ENCODE measurements at regions of chr3 and their contacts with region 1.

Region 1: GRCh38 chr3:141311496-141312353 is 56.6 kb upstream of the ZBTB38 start:
- DNase-seq: peak; percentile 92
- ATAC-seq: peak; percentile 97
- H3K4me3 Mint-ChIP-seq: peak overlapping the region; percentile 100
- H3K27ac Mint-ChIP-seq: peak overlapping the region; percentile 98
- H3K4me1 Mint-ChIP-seq: peaks cover 19% of the 10 kb centered on the region
- H3K27me3 Mint-ChIP-seq: no peaks in the 10 kb centered on the region
- CTCF ChIP-seq: no peak

Region 2: DNA sequence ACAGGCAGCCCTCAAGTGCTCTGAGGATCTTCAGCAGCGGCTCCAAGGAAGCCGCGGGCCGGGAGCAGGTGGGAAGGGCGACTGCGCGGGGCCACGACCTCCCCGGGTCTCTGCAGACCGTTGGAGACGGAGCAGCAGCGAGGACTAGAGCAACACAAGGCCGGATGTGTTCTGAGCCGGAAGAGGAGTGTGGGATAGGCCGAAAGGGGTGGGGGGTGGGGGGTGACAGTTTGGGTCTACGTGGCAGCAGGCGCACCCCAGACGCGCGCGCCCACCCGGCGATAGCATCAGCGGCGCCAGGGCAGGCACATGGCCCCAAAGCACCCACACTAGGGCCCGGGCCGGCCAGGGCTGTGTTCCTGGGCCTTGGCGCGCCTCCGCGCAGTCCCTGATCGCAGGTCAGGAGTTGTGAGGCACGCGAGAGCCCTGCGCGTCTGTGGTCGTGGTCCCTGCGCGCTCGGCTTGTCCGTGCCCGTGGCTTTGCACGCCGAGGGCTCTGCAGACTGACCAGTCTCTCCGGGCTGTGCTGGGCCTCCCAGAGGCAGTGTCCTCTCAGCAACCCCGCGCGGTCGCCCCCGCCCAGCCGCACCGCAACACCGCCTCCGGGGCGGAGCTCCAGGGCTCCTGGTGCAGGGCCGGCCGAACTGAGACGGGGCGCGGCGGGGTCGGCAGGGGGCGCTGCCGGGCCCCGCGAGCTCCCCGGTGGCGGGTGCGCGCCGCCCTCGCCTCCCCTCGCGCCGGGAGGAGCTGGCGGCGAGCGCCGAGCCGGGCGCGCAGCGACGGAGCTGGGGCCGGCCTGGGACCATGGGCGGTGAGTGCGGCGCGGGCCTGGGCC is 80.4 kb before region 1 on chr3 and contains the start of gene PXYLP1:
- CTCF ChIA-PET with region 1: interaction called, 4 read pairs
- POLR2A ChIA-PET with region 1: interaction called, 12 read pairs
- intact Hi-C with region 1: loop called (anchors 1 kb)
- DNase-seq: peak; percentile 91
- ATAC-seq: peak; percentile 96
- H3K4me3 Mint-ChIP-seq: peak within 1 kb of the TSS; percentile 93
- H3K27ac Mint-ChIP-seq: peak within 1 kb of the TSS; percentile 94
- H3K4me1 Mint-ChIP-seq: peaks cover 16% of the 10 kb centered on the region
- H3K27me3 Mint-ChIP-seq: no peaks in the 10 kb centered on the region
- CTCF ChIP-seq: no peak
- total RNA-seq, gene PXYLP1: 2.3 and 2.7 TPM in 2 replicates

Region 3: GRCh38 chr3:141360888-141361598 is 49.3 kb after region 1 on chr3:
- CTCF ChIA-PET with region 1: interaction called, 15 read pairs
- POLR2A ChIA-PET with region 1: interaction called, 5 read pairs
- intact Hi-C with region 1: no loop called
- DNase-seq: no peak
- ATAC-seq: peak; percentile 49
- H3K4me3 Mint-ChIP-seq: peak overlapping the region; percentile 13
- H3K27ac Mint-ChIP-seq: no peak overlapping the region
- H3K4me1 Mint-ChIP-seq: peaks cover 7% of the 10 kb centered on the region
- H3K27me3 Mint-ChIP-seq: peaks cover 3% of the 10 kb centered on the region
- CTCF ChIP-seq: no peak

Region 4: GRCh38 chr3:141441381-141442364 is 129.9 kb after region 1 on chr3:
- CTCF ChIA-PET with region 1: interaction called, 25 read pairs
- POLR2A ChIA-PET with region 1: interaction called, 19 read pairs
- intact Hi-C with region 1: loop called (anchors 1 kb)
- DNase-seq: peak; percentile 60
- ATAC-seq: peak; percentile 100
- H3K4me3 Mint-ChIP-seq: peak overlapping the region; percentile 20
- H3K27ac Mint-ChIP-seq: peak overlapping the region; percentile 69
- H3K4me1 Mint-ChIP-seq: peaks cover 29% of the 10 kb centered on the region
- H3K27me3 Mint-ChIP-seq: no peaks in the 10 kb centered on the region
- CTCF ChIP-seq: peak; percentile 63

Region 5: GRCh38 chr3:141487521-141488252 is 176.0 kb after region 1 on chr3:
- CTCF ChIA-PET with region 1: no interaction called
- POLR2A ChIA-PET with region 1: interaction called, 12 read pairs
- intact Hi-C with region 1: loop called (anchors 1 kb)
- DNase-seq: no peak
- ATAC-seq: peak; percentile 73
- H3K4me3 Mint-ChIP-seq: peak overlapping the region; percentile 84
- H3K27ac Mint-ChIP-seq: peak overlapping the region; percentile 92
- H3K4me1 Mint-ChIP-seq: peaks cover 76% of the 10 kb centered on the region
- H3K27me3 Mint-ChIP-seq: no peaks in the 10 kb centered on the region
- CTCF ChIP-seq: no peak

Region 6: DNA sequence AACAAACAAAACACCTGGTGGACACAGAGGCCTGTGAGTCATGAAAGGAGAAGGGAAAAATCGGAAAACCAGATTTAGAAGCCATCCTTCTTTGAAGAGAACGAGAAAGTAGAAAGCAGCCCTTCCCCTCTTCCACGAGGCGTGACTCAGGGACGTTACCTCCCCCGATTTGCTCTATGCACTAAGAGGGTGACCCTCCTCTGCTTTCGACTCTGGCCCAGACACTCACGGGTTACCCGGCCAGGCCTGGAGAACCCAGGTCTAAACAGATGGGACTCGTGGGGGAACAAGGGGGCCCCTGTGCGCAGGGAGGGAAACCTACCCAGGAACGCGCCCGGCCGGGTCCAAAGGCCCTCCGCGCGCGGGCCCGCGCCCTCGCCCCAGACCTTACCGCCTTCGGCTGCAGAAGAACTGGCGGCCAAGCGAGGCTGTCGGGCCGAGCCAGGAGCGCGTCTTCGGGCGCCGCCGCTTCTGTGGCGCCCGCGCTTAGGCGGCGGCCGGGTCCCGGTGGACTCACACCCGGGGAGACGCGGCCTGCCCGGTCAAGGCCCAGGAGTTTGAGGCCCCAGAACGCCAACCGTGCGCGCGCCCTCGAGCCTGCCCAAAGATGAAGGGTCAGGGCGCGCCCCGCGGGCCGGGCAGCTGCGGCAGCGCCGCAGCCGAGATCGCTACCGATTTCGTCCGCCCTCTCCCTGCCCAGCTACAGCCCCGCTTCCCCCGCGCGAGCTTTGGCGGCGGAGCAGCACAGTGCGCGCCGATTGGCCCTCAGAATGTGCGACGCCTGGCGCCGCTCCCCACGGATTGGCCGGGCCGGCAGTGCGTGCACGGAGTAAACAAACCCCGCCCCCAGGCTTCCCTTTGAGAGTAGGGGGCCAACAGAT is 837.3 kb after region 1 on chr3 and contains the start of gene TFDP2:
- CTCF ChIA-PET with region 1: no interaction called
- POLR2A ChIA-PET with region 1: interaction called, 3 read pairs
- intact Hi-C with region 1: loop called (anchors 5 kb)
- DNase-seq: peak; percentile 78
- ATAC-seq: peak; percentile 99
- H3K4me3 Mint-ChIP-seq: peak within 1 kb of the TSS; percentile 86
- H3K27ac Mint-ChIP-seq: peak within 1 kb of the TSS; percentile 72
- H3K4me1 Mint-ChIP-seq: peaks cover 14% of the 10 kb centered on the region
- H3K27me3 Mint-ChIP-seq: no peaks in the 10 kb centered on the region
- CTCF ChIP-seq: no peak
- total RNA-seq, gene TFDP2: 20.0 and 23.1 TPM in 2 replicates

Region 7: GRCh38 chr3:142578327-142579223 is 1266.8 kb after region 1 on chr3 and contains the start of gene ATR:
- CTCF ChIA-PET with region 1: no interaction called
- POLR2A ChIA-PET with region 1: no interaction called
- intact Hi-C with region 1: loop called (anchors 5 kb)
- DNase-seq: peak; percentile 92
- ATAC-seq: peak; percentile 95
- H3K4me3 Mint-ChIP-seq: peak within 1 kb of the TSS; percentile 96
- H3K27ac Mint-ChIP-seq: peak within 1 kb of the TSS; percentile 97
- H3K4me1 Mint-ChIP-seq: peaks cover 48% of the 10 kb centered on the region
- H3K27me3 Mint-ChIP-seq: peaks cover 5% of the 10 kb centered on the region
- CTCF ChIP-seq: no peak
- total RNA-seq, gene ATR: 47.4 and 47.6 TPM in 2 replicates